Dendritic cell treated with granulocyte-macrophage colony-stimulating factor and Interleukin-4, amounts not matched to agents 40 ng/mL and 50 ng/mL, for 4 days (primary cell): ENCODE measurements at regions of chr16 and their contacts with region 1.

Region 1: DNA sequence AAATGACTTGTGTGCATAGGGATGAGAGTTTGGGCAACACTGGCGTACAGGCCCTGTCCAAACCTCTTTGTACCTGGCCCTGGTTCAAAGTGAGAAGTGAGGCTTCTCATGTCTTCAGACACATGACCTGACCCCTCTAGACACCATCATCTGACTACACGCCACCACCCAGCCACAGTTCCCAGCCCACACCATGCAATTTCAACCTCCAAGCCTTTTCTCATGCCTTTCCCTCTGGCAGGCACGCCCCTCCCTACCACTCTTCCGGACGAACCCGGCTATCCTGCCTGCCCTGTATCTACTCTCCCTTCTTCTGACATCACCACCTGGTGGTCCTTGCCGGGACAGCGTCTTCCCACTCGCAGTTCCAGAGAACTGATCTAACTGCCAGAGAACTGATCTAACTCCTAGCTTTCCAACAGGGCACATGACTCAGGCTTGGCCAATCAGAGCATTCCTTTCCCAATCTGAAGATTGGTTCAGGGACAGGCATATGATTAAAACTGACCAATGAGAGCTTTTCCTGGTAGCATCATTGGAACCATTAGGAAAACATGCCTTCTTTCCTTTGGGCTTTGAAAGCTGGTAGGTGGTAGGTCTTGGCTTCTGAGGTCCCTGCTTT is 27.1 kb upstream of the IL21R start:
- H3K4me3 Mint-ChIP-seq: no peak overlapping the region
- H3K27ac Mint-ChIP-seq: no peak overlapping the region
- H3K4me1 Mint-ChIP-seq: peaks cover 48% of the 10 kb centered on the region
- H3K27me3 Mint-ChIP-seq: no peaks in the 10 kb centered on the region

Region 2: GRCh38 chr16:27289669-27290068 is 85.2 kb before region 1 on chr16:
- intact Hi-C with region 1: no loop called
- H3K4me3 Mint-ChIP-seq: no peak overlapping the region
- H3K27ac Mint-ChIP-seq: no peak overlapping the region
- H3K4me1 Mint-ChIP-seq: peaks cover 49% of the 10 kb centered on the region
- H3K27me3 Mint-ChIP-seq: no peaks in the 10 kb centered on the region

Region 3: DNA sequence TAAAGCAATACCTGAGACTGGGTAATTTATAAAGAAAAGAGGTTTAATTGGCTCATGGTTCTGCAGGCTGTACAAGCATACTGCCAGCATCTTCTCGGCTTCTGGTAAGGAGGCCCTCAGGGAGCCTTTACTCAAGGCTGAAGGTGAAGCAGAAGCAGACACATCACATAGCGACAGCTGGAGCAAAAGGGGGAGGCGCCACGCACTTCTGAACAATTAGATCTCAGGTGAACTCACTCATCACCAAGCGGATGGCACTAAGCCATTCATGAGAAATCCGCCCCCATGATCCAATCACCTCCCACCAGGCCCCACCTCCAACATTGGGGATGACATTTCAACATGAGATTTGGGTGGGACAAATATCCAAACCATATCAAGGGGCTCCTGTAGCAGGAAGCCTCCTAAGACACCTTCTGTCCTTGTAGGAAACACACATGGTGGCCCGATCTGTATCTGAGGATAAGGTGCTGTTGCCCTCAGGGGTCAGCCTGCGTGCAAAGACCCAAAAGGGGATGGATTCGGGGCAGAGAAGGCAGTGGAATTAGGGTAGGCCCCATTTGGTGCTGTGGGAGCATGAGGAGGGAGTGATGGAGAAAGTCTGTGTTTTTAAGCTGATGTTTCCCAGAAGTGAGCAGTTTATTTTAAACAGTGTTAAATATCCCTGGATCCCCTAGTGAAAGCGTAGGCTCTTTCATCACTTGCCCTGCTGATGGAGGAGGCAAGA is 50.0 kb after region 1 on chr16:
- intact Hi-C with region 1: loop called (anchors 5 kb)
- H3K4me3 Mint-ChIP-seq: no peak overlapping the region
- H3K27ac Mint-ChIP-seq: no peak overlapping the region
- H3K4me1 Mint-ChIP-seq: peaks cover 33% of the 10 kb centered on the region
- H3K27me3 Mint-ChIP-seq: no peaks in the 10 kb centered on the region

Region 4: GRCh38 chr16:27470567-27471431 is 95.9 kb after region 1 on chr16:
- intact Hi-C with region 1: no loop called
- H3K4me3 Mint-ChIP-seq: no peak overlapping the region
- H3K27ac Mint-ChIP-seq: no peak overlapping the region
- H3K4me1 Mint-ChIP-seq: peaks cover 9% of the 10 kb centered on the region
- H3K27me3 Mint-ChIP-seq: no peaks in the 10 kb centered on the region